ENCODE measurements at regions of chr17 and their contacts with region 1.

Region 1: DNA sequence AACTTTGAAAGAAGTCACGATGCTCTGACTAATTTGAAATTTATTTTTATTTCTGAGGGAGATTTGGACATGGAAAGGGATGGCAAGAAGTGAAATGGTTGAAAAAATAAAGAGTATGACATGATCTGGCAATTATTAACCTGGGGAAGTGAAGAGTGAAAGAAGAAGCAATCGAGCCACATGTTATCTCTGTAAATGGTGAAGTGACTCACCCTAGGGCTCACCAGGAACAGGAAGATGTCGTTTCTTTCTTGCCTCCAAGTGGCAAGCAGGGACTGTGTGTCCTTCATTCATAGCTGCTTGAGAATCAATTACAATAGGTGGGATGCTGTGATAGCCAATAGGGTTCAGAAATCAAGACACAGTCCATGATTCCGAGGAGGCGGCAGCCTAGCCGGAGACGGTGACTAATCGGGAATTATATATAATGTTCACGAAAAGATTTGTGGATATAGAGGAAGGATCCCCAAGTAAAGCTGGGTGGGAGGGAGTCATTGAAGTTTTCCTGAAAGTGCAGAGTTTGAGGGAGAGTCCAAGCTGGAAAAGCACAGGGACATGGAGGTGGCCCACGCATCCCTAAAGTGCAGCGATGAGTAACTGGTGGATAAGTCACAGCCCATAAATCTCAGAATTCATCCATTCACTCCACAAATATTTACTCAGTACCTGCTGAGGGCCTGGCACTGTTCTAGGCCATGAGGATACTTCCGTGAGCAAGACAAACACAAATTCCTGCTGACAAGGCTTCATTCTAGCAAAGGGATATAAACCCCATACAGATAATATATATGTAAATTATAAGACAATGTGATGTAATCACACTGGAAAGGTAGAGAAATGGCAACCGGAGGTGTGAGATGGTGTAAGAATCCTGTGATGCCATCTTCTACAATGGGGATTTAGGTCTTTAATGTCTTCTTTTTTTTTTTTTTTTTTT is 18.4 kb upstream of the KRT20 start:
- DNase-seq: peak; percentile 82
- ATAC-seq: peak; percentile 39
- H3K4me3 ChIP-seq: peak overlapping the region in 1 of 3 experiments; percentile 20; a peak in 1 of 6 replicates
- H3K27ac ChIP-seq: peak overlapping the region; percentile 89
- H3K4me1 ChIP-seq: peaks cover 57% of the 10 kb centered on the region
- H3K27me3 ChIP-seq: no peaks in the 10 kb centered on the region
- CTCF ChIP-seq: no peak
- EP300 ChIP-seq: peak in 1 of 2 experiments; percentile 75; a peak in 2 of 4 replicates
- POLR2A ChIP-seq: 0 out of 4 replicates have a peak, but pooled peaks of 1 of the 2 experiments have one; percentile 36
- RAD21 ChIP-seq: no peak

Region 2: GRCh38 chr17:40818733-40819527 is 84.5 kb before region 1 on chr17:
- CTCF ChIA-PET with region 1: no interaction called
- POLR2A ChIA-PET with region 1: interaction called, 18 read pairs
- in situ Hi-C with region 1: no loop called
- intact Hi-C with region 1: no loop called
- DNase-seq: peak; percentile 68
- ATAC-seq: peak; percentile 97
- H3K4me3 ChIP-seq: peak overlapping the region; percentile 74 to 93 (median 81)
- H3K27ac ChIP-seq: peak overlapping the region; percentile 82
- H3K4me1 ChIP-seq: peaks cover 33% of the 10 kb centered on the region
- H3K27me3 ChIP-seq: no peaks in the 10 kb centered on the region; a peak in 1 of 5 replicates
- CTCF ChIP-seq: no peak
- EP300 ChIP-seq: no peak
- POLR2A ChIP-seq: peak; percentile 72 to 76
- RAD21 ChIP-seq: peak; percentile 61; the same call in 1 of the 2 replicates

Region 3: GRCh38 chr17:40854159-40854814 is 49.1 kb before region 1 on chr17:
- CTCF ChIA-PET with region 1: no interaction called
- POLR2A ChIA-PET with region 1: no interaction called
- in situ Hi-C with region 1: no loop called
- intact Hi-C with region 1: loop called (anchors 5 kb)
- DNase-seq: peak; percentile 55
- ATAC-seq: peak; percentile 46; the same call in 1 of the 3 replicates
- H3K4me3 ChIP-seq: no peak overlapping the region
- H3K27ac ChIP-seq: no peak overlapping the region
- H3K4me1 ChIP-seq: peaks cover 10% of the 10 kb centered on the region; the same call in 1 of the 2 replicates
- H3K27me3 ChIP-seq: 0 out of 5 replicates have a peak, but pooled peaks cover 0 to 3% of the 10 kb centered on the region in 2 experiments
- CTCF ChIP-seq: no peak
- EP300 ChIP-seq: peak in 1 of 2 experiments; percentile 66; a peak in 2 of 4 replicates
- POLR2A ChIP-seq: no peak
- RAD21 ChIP-seq: no peak

Region 4: GRCh38 chr17:40915199-40915661 is 11.8 kb after region 1 on chr17:
- CTCF ChIA-PET with region 1: no interaction called
- POLR2A ChIA-PET with region 1: interaction called, 12 read pairs
- in situ Hi-C with region 1: no loop called
- intact Hi-C with region 1: no loop called
- DNase-seq: peak; percentile 96
- ATAC-seq: peak; percentile 81
- H3K4me3 ChIP-seq: no peak overlapping the region
- H3K27ac ChIP-seq: peak overlapping the region; percentile 56
- H3K4me1 ChIP-seq: peaks cover 25% of the 10 kb centered on the region
- H3K27me3 ChIP-seq: no peaks in the 10 kb centered on the region
- CTCF ChIP-seq: no peak
- EP300 ChIP-seq: peak; percentile 12 to 79; a peak in 1 of 4 replicates
- POLR2A ChIP-seq: no peak
- RAD21 ChIP-seq: no peak

Region 5: DNA sequence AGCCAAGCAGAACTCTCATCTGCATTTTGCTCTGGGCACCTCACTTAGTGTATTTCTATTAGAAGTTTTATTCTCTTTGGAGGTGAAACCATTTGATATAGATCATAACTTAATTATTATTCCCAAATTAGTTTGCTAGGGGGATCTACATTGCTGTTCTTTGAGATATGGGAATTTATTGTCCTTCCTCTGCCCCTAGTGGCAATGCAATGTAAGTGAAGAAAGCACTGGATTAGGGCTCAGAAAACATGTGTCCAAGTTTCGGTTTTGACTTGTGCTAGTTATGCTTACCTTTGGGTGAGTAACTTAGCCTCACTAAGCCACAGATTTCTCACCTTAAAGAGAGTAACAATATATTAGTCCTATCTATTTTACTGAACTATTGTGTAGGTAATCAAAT is 60.4 kb after region 1 on chr17:
- CTCF ChIA-PET with region 1: no interaction called
- POLR2A ChIA-PET with region 1: no interaction called
- in situ Hi-C with region 1: no loop called
- intact Hi-C with region 1: no loop called
- DNase-seq: no peak
- ATAC-seq: peak; percentile 38; the same call in 1 of the 3 replicates
- H3K4me3 ChIP-seq: no peak overlapping the region
- H3K27ac ChIP-seq: no peak overlapping the region
- H3K4me1 ChIP-seq: peaks cover 29% of the 10 kb centered on the region
- H3K27me3 ChIP-seq: no peaks in the 10 kb centered on the region
- CTCF ChIP-seq: peak; percentile 56
- EP300 ChIP-seq: no peak
- POLR2A ChIP-seq: no peak
- RAD21 ChIP-seq: no peak

Measured in HepG2 (cell line).